ENCODE measurements at regions of chrX and their contacts with region 1.

Region 1: GRCh38 chrX:46903458-46904242 is 8.6 kb upstream of the JADE3 start:
- DNase-seq: peak; percentile 82
- H3K4me3 ChIP-seq: peak overlapping the region; percentile 53 to 65
- H3K27ac ChIP-seq: peak overlapping the region in 1 of 2 experiments; percentile 56; a peak in 2 of 4 replicates
- H3K4me1 ChIP-seq: peaks cover 0 to 4% of the 10 kb centered on the region in 2 experiments; a peak in 1 of 4 replicates
- H3K27me3 ChIP-seq: no peaks in the 10 kb centered on the region
- CTCF ChIP-seq: peak; percentile 68
- EP300 ChIP-seq: no peak
- RAD21 ChIP-seq: peak; percentile 79

Region 2: GRCh38 chrX:46620505-46620904 is 283.1 kb before region 1 on chrX:
- CTCF ChIA-PET with region 1: no interaction called
- POLR2A ChIA-PET with region 1: no interaction called
- DNase-seq: no peak
- H3K4me3 ChIP-seq: no peak overlapping the region
- H3K27ac ChIP-seq: no peak overlapping the region
- H3K4me1 ChIP-seq: no peaks in the 10 kb centered on the region
- H3K27me3 ChIP-seq: no peaks in the 10 kb centered on the region; the same call in 1 of the 2 replicates
- CTCF ChIP-seq: no peak
- EP300 ChIP-seq: no peak
- RAD21 ChIP-seq: no peak

Region 3: GRCh38 chrX:46758906-46759644 is 144.6 kb before region 1 on chrX and contains the start of gene SLC9A7:
- CTCF ChIA-PET with region 1: no interaction called
- POLR2A ChIA-PET with region 1: no interaction called
- DNase-seq: peak; percentile 80
- H3K4me3 ChIP-seq: peak within 1 kb of the TSS; percentile 60 to 64
- H3K27ac ChIP-seq: peak within 1 kb of the TSS in 1 of 2 experiments; percentile 33; a peak in 2 of 4 replicates
- H3K4me1 ChIP-seq: peaks cover 6 to 9% of the 10 kb centered on the region in 2 experiments; a peak in 2 of 4 replicates
- H3K27me3 ChIP-seq: peaks cover 17% of the 10 kb centered on the region; the same call in 1 of the 2 replicates
- CTCF ChIP-seq: peak; percentile 77
- EP300 ChIP-seq: no peak
- RAD21 ChIP-seq: peak; percentile 78
- polyA plus RNA-seq, gene SLC9A7: 10.3 and 10.5 TPM in 2 replicates

Region 4: GRCh38 chrX:46865281-46865680 is 38.4 kb before region 1 on chrX:
- CTCF ChIA-PET with region 1: no interaction called
- POLR2A ChIA-PET with region 1: no interaction called
- DNase-seq: no peak
- H3K4me3 ChIP-seq: no peak overlapping the region
- H3K27ac ChIP-seq: peak overlapping the region in 1 of 2 experiments; percentile 63; a peak in 2 of 4 replicates
- H3K4me1 ChIP-seq: no peaks in the 10 kb centered on the region
- H3K27me3 ChIP-seq: no peaks in the 10 kb centered on the region
- CTCF ChIP-seq: no peak
- EP300 ChIP-seq: no peak
- RAD21 ChIP-seq: no peak

Region 5: GRCh38 chrX:46978341-46979291 is 75.0 kb after region 1 on chrX:
- CTCF ChIA-PET with region 1: interaction called, 12 read pairs
- POLR2A ChIA-PET with region 1: no interaction called
- DNase-seq: peak; percentile 42
- H3K4me3 ChIP-seq: peak overlapping the region in 1 of 2 experiments; percentile 30; a peak in 1 of 4 replicates
- H3K27ac ChIP-seq: peak overlapping the region; percentile 64 to 99; a peak in 3 of 4 replicates
- H3K4me1 ChIP-seq: peaks cover 0 to 6% of the 10 kb centered on the region in 2 experiments; a peak in 2 of 4 replicates
- H3K27me3 ChIP-seq: no peaks in the 10 kb centered on the region; the same call in 1 of the 2 replicates
- CTCF ChIP-seq: peak; percentile 87
- EP300 ChIP-seq: no peak
- RAD21 ChIP-seq: peak; percentile 63

Region 6: DNA sequence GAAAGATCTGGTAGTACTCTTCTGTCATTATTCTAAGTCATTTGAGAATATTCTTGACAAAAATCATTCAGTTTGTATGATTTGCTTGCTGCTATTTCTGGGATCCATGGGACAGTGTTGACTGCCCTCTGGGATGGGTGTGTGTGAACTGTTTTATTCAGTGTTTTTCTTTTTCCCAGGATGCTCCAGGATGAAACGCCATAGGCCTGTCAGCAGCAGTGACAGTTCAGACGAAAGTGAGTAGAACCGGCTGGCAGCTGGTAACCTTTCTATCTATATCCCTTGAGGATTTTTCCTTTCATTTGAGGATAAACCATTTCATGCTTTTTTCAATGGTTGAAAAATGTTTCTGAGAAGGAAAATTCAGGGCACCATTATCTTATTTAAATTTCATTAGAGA is 81.1 kb after region 1 on chrX:
- CTCF ChIA-PET with region 1: interaction called, 10 read pairs
- POLR2A ChIA-PET with region 1: no interaction called
- DNase-seq: no peak
- H3K4me3 ChIP-seq: no peak overlapping the region
- H3K27ac ChIP-seq: no peak overlapping the region
- H3K4me1 ChIP-seq: no peaks in the 10 kb centered on the region; a peak in 1 of 4 replicates
- H3K27me3 ChIP-seq: no peaks in the 10 kb centered on the region
- CTCF ChIP-seq: no peak
- EP300 ChIP-seq: no peak
- RAD21 ChIP-seq: no peak

Region 7: DNA sequence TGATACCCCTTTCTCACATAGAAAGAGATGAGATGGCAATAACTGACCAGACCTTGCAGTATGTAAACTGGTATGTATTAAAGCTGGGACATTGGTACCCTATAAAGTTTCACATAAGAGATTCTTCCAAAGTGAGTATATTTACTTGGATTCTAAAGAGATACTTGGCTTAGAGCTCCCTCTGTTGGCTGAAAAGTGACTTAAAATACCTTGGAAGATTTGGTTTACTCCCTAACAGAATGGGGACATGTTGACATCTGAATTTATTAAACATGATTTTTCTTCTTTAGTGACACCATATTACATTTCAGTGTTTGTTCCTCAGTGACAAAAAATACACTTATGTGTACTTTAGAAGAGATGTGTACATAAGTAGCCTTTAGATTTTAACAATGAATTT is 126.7 kb after region 1 on chrX:
- CTCF ChIA-PET with region 1: interaction called, 24 read pairs
- POLR2A ChIA-PET with region 1: no interaction called
- DNase-seq: peak; percentile 41
- H3K4me3 ChIP-seq: no peak overlapping the region
- H3K27ac ChIP-seq: no peak overlapping the region
- H3K4me1 ChIP-seq: no peaks in the 10 kb centered on the region
- H3K27me3 ChIP-seq: no peaks in the 10 kb centered on the region
- CTCF ChIP-seq: peak; percentile 80
- EP300 ChIP-seq: no peak
- RAD21 ChIP-seq: peak; percentile 81

Region 8: GRCh38 chrX:47093248-47093647 is 189.6 kb after region 1 on chrX:
- CTCF ChIA-PET with region 1: interaction called, 28 read pairs
- POLR2A ChIA-PET with region 1: no interaction called
- DNase-seq: peak; percentile 26
- H3K4me3 ChIP-seq: no peak overlapping the region
- H3K27ac ChIP-seq: no peak overlapping the region
- H3K4me1 ChIP-seq: no peaks in the 10 kb centered on the region
- H3K27me3 ChIP-seq: peaks cover 12% of the 10 kb centered on the region; the same call in 1 of the 2 replicates
- CTCF ChIP-seq: peak; percentile 74
- EP300 ChIP-seq: no peak
- RAD21 ChIP-seq: peak; percentile 69